ENCODE measurements at regions of chr15 and their contacts with region 1.

Region 1: DNA sequence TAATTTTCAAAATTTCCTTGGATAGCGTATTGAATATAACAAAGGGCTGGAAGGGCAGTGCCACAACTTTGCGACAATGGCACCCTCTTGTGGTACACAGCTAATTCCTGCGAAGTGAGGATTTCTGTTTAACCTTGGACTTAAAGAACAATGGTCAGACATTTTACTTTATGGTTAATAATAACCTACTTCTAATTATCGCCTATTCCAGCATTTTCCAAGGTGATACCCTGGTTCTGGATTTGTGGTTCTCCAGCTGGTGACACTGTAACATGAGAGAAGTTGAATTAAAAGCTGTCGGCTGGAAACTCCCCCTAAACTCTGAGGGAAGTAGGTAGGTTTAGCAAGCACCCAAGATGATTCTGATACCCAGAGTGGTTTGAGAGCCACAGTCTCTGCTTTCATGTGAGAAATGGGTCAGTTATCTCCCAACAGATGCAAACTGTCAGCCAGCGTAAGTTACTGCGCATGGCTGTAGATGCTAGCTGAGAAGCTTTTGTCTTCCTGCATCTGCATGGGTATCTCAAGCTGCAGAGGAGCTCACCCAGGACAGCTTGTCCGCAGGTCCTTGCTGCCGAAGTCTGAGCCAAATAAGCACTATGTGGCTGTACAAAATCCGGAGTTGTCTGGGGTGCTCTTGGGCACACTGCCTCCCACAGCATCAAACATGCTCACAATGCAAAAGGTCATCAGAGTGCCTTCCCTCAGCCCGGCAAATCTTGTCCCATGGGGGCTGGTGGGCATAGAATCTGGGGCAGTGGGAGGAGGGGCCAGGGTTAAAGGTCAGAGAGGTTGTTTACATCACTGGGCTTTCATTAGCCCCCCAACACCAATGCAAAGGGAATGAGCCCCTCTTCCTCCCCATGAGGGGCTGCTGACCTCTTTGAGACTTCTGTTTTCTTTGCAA is 6.6 kb upstream of the CHSY1 start:
- DNase-seq: peak in 4 of 5 donors; percentile 49 to 61 (median 52)
- H3K4me3 ChIP-seq: no peak overlapping the region
- H3K4me3 Mint-ChIP-seq: no peak overlapping the region
- H3K27ac ChIP-seq: no peak overlapping the region
- H3K27ac Mint-ChIP-seq: peak overlapping the region in 1 of 7 donors; percentile 53
- H3K4me1 ChIP-seq: no peaks in the 10 kb centered on the region
- H3K4me1 Mint-ChIP-seq: peaks cover 0 to 3% (median under 1%) of the 10 kb centered on the region in 4 donors
- H3K27me3 ChIP-seq: no peaks in the 10 kb centered on the region
- H3K27me3 Mint-ChIP-seq: peaks cover 0 to 6% of the 10 kb centered on the region in 2 donors

Region 2: DNA sequence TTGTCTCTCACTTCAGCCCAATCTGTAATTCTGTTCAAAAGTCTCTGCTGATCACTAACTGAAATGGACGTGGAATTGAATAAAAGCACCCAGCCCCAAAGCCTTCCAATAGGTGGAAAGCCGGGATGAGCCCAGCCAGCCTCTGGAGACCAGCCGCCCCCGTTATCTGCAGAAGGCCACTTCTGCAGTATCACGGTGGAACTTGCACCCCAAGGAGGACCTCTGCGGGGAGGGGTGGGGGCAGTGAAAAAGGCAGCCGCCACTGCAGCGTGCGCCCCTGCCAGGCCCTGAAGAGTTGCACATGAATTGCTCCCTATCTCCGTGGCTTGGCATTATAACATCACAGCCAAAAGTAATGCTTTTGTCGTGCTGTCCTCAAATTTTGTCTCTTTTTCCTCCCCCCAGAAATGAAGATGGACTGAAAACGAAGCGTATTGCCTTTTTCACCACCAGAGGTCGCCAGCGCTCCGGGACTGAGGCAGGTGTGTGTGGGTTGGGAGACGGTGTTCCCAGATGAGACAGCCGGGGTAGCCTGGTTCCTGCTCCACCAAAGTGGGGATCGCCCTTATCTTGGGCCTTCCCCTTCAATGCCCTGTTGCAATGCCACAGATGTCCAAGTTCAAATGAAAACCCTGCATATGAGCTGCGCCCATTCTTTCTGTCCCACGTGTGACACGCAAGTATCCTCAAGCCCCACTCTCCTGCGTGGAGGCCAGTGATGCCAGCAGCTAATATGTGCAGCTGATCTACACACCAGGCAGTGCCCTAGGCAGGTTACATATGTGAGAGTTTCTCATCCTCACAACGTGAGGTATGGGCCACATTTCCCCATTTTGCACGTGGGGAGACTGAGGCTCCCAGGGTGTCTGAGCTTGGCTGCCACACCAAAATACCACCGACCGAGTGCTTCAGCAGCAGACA is 243.3 kb before region 1 on chr15:
- CTCF ChIA-PET with region 1: interaction called, 49 read pairs
- POLR2A ChIA-PET with region 1: no interaction called
- intact Hi-C with region 1: no loop called
- DNase-seq: peak; percentile 42 to 53 (median 51)
- H3K4me3 ChIP-seq: no peak overlapping the region
- H3K4me3 Mint-ChIP-seq: no peak overlapping the region
- H3K27ac ChIP-seq: no peak overlapping the region
- H3K27ac Mint-ChIP-seq: no peak overlapping the region
- H3K4me1 ChIP-seq: no peaks in the 10 kb centered on the region
- H3K4me1 Mint-ChIP-seq: peaks cover 0 to 5% (median under 1%) of the 10 kb centered on the region in 4 donors
- H3K27me3 ChIP-seq: no peaks in the 10 kb centered on the region
- H3K27me3 Mint-ChIP-seq: peaks cover 5 to 6% of the 10 kb centered on the region in 2 donors

Region 3: DNA sequence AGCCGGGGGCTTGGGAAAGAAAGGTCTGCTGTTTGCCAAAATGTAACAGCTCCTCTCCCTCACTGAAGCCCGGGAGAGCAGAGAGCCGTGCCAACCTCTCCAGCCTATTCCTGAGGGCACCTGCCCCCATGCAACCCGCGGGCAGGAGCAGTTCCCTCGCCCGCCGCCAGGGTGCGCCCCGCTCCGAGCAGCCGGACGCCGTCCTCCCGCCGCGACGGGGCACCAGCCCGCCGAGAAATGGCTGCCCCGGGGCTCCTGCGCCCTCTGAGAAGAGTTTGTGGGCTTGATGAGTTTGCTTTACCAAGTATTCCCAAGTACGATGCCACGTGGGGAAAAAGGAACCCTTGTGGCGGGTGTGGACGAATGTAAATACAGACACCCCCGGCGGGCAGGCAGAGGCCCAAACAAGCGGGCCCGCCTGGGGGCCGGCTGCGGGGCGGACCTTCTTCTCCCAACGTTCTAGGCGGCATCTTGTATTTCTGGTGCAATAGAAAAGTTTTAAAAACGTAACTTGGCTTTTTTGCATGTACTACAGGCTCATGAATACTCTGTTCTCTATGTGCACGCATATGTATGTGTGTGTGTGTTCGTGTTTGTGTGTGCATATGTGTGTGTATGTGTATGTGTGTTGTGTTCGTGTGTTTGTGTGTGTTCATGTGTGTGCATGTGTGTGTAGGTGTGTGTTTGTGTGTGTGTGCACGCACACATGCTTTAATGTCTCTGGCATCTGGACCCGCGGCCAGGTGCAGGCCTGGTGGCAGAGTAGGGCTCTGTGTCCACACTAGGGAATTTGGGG is 169.5 kb before region 1 on chr15:
- CTCF ChIA-PET with region 1: interaction called, 40 read pairs
- POLR2A ChIA-PET with region 1: no interaction called
- intact Hi-C with region 1: loop called (anchors 1 kb)
- DNase-seq: peak; percentile 53 to 79 (median 67)
- H3K4me3 ChIP-seq: no peak overlapping the region
- H3K4me3 Mint-ChIP-seq: peak overlapping the region in 1 of 8 donors; percentile 49
- H3K27ac ChIP-seq: no peak overlapping the region
- H3K27ac Mint-ChIP-seq: no peak overlapping the region
- H3K4me1 ChIP-seq: no peaks in the 10 kb centered on the region
- H3K4me1 Mint-ChIP-seq: peaks cover 0 to 2% (median 0%) of the 10 kb centered on the region in 4 donors
- H3K27me3 ChIP-seq: no peaks in the 10 kb centered on the region
- H3K27me3 Mint-ChIP-seq: peaks cover 0 to 6% of the 10 kb centered on the region in 2 donors

Region 4: GRCh38 chr15:101127506-101128076 is 130.9 kb before region 1 on chr15:
- CTCF ChIA-PET with region 1: interaction called, 10 read pairs
- POLR2A ChIA-PET with region 1: interaction called, 3 read pairs
- intact Hi-C with region 1: loop called (anchors 5 kb)
- DNase-seq: peak in 4 of 5 donors; percentile 15 to 27 (median 24)
- H3K4me3 ChIP-seq: peak overlapping the region; percentile 6 to 12
- H3K4me3 Mint-ChIP-seq: peak overlapping the region; percentile 44 to 73 (median 57)
- H3K27ac ChIP-seq: peak overlapping the region; percentile 51
- H3K27ac Mint-ChIP-seq: peak overlapping the region; percentile 79 to 96 (median 93)
- H3K4me1 ChIP-seq: peaks cover 26% of the 10 kb centered on the region
- H3K4me1 Mint-ChIP-seq: peaks cover 29 to 45% (median 41%) of the 10 kb centered on the region in 4 donors
- H3K27me3 ChIP-seq: no peaks in the 10 kb centered on the region
- H3K27me3 Mint-ChIP-seq: peaks cover 0 to 3% of the 10 kb centered on the region in 2 donors

Region 5: GRCh38 chr15:101194546-101195125 is 63.9 kb before region 1 on chr15:
- CTCF ChIA-PET with region 1: no interaction called
- POLR2A ChIA-PET with region 1: no interaction called
- intact Hi-C with region 1: loop called (anchors 2 kb)
- DNase-seq: no peak
- H3K4me3 ChIP-seq: no peak overlapping the region
- H3K4me3 Mint-ChIP-seq: peak overlapping the region in 5 of 8 donors; percentile 7 to 57 (median 22)
- H3K27ac ChIP-seq: no peak overlapping the region
- H3K27ac Mint-ChIP-seq: no peak overlapping the region
- H3K4me1 ChIP-seq: peaks cover 38% of the 10 kb centered on the region
- H3K4me1 Mint-ChIP-seq: peaks cover 41 to 89% (median 60%) of the 10 kb centered on the region in 4 donors
- H3K27me3 ChIP-seq: no peaks in the 10 kb centered on the region
- H3K27me3 Mint-ChIP-seq: no peaks in the 10 kb centered on the region

Region 6: GRCh38 chr15:101242160-101242998 is 16.1 kb before region 1 on chr15:
- CTCF ChIA-PET with region 1: interaction called, 33 read pairs
- POLR2A ChIA-PET with region 1: interaction called, 64 read pairs
- intact Hi-C with region 1: no loop called
- DNase-seq: peak; percentile 78 to 88 (median 80)
- H3K4me3 ChIP-seq: peak overlapping the region in 1 of 2 donors; percentile 57
- H3K4me3 Mint-ChIP-seq: peak overlapping the region; percentile 64 to 89 (median 80)
- H3K27ac ChIP-seq: peak overlapping the region; percentile 49
- H3K27ac Mint-ChIP-seq: peak overlapping the region; percentile 82 to 97 (median 89)
- H3K4me1 ChIP-seq: peaks cover 87% of the 10 kb centered on the region
- H3K4me1 Mint-ChIP-seq: peaks cover 67 to 96% (median 78%) of the 10 kb centered on the region in 4 donors
- H3K27me3 ChIP-seq: no peaks in the 10 kb centered on the region
- H3K27me3 Mint-ChIP-seq: no peaks in the 10 kb centered on the region

Region 7: DNA sequence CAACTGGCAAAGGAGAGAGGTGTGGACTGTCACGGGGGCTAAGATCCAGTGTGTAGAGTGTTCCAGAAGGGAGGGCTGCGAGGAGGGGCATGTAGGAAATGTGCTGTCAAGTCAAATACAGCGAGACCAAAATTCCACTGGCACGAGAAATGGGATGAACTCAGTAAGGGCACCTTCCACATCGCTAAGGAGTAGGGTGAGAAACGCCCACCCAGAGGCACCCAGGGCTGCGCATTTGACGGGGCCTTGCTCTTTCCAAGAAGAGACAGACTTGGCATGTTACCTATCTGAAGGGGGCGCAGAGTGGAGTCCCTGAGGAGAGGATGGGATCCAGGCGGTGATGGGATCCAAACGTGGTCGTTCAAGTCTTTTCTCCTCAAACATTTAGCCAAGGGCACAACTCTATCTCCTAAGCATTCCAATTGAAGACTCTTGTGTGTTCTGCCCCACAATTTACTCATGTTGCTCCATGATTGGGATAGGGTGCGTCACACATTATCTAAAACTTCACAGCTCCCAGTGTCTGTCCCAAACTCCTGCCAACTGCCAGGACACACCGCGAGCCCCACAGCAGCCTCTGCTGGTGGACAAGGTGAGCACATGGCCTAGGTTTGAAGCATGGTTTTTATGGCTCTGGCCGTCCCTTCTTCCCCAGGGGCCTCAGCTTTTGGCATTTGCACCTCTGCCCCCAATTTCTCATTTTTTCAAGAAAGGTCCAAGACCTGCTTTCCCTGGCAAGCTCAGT is 11.2 kb after region 1 on chr15:
- CTCF ChIA-PET with region 1: interaction called, 20 read pairs
- POLR2A ChIA-PET with region 1: no interaction called
- intact Hi-C with region 1: no loop called
- DNase-seq: no peak
- H3K4me3 ChIP-seq: no peak overlapping the region
- H3K4me3 Mint-ChIP-seq: no peak overlapping the region
- H3K27ac ChIP-seq: no peak overlapping the region
- H3K27ac Mint-ChIP-seq: peak overlapping the region in 3 of 7 donors; percentile 36 to 51 (median 43)
- H3K4me1 ChIP-seq: no peaks in the 10 kb centered on the region
- H3K4me1 Mint-ChIP-seq: peaks cover 0 to 6% (median 0%) of the 10 kb centered on the region in 4 donors
- H3K27me3 ChIP-seq: no peaks in the 10 kb centered on the region
- H3K27me3 Mint-ChIP-seq: no peaks in the 10 kb centered on the region

Region 8: DNA sequence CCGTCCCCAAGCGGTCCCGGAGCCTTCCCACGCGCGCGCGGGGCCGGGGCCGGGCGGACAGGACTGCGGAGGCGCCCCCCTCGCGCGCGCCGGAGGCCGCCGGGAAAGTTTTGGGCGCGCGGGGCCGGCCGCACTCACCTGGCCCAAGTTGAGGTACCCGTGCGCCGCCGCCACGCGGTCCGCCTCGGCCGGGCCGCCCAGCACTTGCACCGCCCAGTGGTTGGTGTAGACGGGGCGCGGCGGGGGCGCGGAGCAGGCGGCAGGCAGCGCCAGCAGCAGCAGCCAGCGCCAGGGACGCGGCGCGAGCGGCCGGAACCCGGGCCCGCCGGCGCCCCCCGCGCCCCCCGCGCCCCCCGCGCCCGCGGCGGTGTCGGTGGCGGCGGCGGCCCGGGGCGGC is 230.7 kb after region 1 on chr15:
- CTCF ChIA-PET with region 1: no interaction called
- POLR2A ChIA-PET with region 1: no interaction called
- intact Hi-C with region 1: no loop called
- DNase-seq: no peak
- H3K4me3 ChIP-seq: no peak overlapping the region
- H3K4me3 Mint-ChIP-seq: no peak overlapping the region
- H3K27ac ChIP-seq: no peak overlapping the region
- H3K27ac Mint-ChIP-seq: no peak overlapping the region
- H3K4me1 ChIP-seq: no peaks in the 10 kb centered on the region
- H3K4me1 Mint-ChIP-seq: peaks cover 0 to 4% (median under 1%) of the 10 kb centered on the region in 4 donors
- H3K27me3 ChIP-seq: peaks cover 10% of the 10 kb centered on the region
- H3K27me3 Mint-ChIP-seq: peaks cover 24 to 26% of the 10 kb centered on the region in 2 donors